ENCODE measurements at regions of chr16 and their contacts with region 1.

Region 1: DNA sequence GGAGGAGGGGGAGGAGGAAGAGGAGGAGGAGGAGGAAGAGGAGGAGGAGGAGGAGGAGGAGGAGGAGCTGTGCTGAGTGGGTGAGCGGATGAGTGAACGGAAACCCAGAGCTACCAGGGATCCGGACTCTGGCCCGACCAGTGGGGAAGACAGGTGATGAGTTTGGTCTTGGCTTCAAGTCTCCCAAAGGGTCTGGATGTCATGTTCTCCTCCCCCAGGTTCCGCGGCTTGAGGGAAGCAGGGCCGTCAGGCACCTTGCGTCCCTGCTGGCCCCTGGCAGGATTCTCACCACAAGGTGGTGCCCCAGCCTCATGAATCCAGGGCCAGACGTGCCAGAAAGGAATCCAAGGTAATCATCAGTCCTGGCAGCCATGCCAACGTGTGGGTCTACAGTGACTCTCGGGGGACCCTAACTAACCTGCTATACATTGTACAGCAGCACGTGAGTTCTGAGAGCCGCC is 13.5 kb upstream of the ABAT start:
- DNase-seq: peak; percentile 74
- CTCF ChIP-seq: peak; percentile 84

Region 2: GRCh38 chr16:8430401-8430800 is 230.5 kb before region 1 on chr16:
- in situ Hi-C with region 1: no loop called
- DNase-seq: no peak
- CTCF ChIP-seq: no peak

Region 3: DNA sequence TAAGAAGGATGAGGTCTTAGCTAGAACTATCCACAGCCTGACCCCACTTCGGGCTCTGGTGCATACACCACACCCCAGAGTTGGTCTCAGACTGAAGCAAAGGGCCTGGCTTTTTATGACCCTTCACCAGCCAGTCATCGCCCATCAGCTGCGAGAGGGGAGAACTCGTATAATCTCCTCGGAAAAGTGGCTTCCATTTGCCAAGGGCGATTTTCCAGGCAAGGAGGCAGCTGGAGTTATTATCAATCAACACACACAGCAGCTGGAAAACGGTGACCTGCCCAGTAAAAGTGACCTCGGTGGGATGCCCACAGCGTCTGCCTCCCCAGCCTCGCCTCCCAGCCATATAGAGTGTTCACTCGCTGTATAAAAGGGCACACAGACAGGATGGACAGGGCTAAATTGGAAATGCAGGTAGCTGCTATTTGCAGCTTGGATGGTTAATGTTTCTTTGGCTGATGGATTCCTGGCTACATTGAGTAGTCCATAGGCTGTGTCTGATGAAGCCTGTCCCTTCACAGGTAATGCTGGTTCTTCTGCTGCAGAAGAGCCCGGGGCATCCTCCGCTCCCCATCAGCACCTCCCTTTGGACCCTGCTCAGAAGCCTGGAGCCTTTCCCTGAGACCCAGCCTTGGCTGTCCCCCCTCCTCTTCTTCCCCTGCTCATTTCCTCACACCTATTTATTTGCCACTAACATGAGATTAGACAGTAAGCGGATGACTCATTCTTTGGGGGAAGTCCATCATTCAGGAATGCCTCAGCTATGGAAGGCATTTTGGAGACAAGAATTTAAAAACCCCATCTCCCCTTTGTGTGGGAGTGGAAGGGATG is 90.8 kb after region 1 on chr16:
- in situ Hi-C with region 1: no loop called
- DNase-seq: no peak
- CTCF ChIP-seq: no peak

Region 4: DNA sequence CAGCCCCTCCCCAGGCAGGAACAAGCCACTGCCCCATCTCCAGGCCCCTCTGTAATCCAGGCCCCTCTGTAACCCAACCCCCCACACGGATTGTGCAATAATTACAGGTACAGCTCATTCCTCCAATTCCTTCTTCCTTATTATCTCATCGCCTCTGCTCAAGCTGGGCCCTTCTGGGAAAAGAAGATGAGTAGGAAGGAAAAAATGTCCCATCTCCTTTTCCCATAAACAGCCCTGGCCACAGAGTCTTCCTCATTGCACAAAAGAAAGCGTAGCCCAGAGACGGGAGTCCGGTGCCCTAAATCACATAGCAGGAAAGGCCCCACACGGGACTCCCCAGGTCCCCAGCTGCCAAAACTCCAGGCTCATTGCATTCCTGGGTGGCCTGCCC is 217.6 kb after region 1 on chr16:
- in situ Hi-C with region 1: loop called (anchors 10 kb)
- DNase-seq: no peak
- CTCF ChIP-seq: no peak

Region 5: GRCh38 chr16:9134739-9135138 is 473.9 kb after region 1 on chr16:
- in situ Hi-C with region 1: loop called (anchors 10 kb)
- DNase-seq: peak; percentile 79
- CTCF ChIP-seq: peak; percentile 75